Sigmoid colon (tissue), 7 donors: ENCODE measurements at regions of chr11 and their contacts with region 1.

Region 1: DNA sequence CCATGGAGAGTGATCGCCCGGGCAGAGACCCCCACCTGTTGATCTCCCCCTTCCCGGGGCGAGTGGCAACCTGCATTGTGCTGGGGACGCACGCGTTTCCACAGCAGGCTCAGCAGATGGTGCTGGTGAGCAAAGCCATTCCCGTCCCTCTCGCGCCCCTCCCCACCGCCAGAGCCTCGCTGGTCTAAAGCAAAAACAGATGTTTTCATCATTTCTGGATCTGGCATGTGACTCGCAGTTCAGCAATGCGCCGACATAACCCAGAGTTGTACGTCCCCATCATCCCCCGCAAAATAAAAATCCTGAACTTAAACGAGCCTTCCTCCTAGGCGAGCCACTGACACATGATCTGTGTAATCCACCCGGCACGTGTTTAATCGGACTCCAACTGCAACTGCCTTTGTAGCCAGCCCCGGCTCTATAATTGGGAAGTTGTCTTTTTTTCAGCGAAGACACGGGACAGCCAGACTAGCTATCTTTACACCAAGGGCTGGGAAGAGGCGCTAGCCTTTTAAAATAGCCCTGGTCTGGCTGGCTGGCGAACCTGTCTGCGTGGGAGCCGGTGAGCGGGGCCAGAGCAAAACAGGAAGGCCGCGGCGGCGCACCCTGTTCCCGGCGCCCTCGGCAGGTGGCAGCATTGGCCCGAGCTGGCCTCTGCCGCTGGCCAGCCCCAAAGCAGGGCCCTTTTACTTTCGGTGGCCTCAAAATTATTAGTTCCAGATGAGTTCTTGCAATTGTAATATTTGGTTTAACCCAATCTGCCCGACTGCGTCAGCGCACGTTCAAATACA is 203.0 kb upstream of the SORL1-AS1 start:
- DNase-seq: peak; percentile 95
- H3K4me3 ChIP-seq: peak overlapping the region; percentile 27 to 50 (median 40)
- H3K27ac ChIP-seq: peak overlapping the region; percentile 83 to 95 (median 89)
- H3K4me1 ChIP-seq: peaks cover 0 to 31% (median 21%) of the 10 kb centered on the region in 4 donors
- H3K27me3 ChIP-seq: no peaks in the 10 kb centered on the region
- CTCF ChIP-seq: peak; percentile 76 to 84 (median 80)
- EP300 ChIP-seq: peak in 2 of 4 donors; percentile 15 to 16
- POLR2A ChIP-seq: no peak

Region 2: DNA sequence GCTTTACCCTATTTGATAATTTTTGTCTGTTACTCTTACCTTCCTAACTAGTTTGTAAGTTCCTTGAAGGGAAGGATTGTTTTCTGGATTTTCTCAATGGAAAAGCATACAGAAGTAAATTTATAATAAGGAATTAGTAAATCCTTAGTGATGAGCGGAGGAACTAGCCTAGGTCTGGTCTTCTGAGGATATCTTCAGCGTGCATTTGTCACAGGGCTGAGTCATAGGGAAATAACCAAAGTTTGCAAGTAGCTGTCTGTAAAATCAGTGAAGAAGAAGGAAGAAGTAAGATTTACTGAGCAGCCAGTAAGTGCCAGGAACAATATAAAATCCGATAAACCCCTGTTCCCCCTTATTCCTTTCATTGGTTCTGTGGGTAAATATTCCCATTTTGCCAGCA is 40.2 kb before region 1 on chr11:
- intact Hi-C with region 1: no loop called
- DNase-seq: no peak
- H3K4me3 ChIP-seq: no peak overlapping the region
- H3K27ac ChIP-seq: no peak overlapping the region
- H3K4me1 ChIP-seq: peaks cover 0 to 7% (median 4%) of the 10 kb centered on the region in 4 donors
- H3K27me3 ChIP-seq: no peaks in the 10 kb centered on the region
- CTCF ChIP-seq: no peak
- EP300 ChIP-seq: no peak
- POLR2A ChIP-seq: no peak

Region 3: GRCh38 chr11:121722431-121723245 is 66.9 kb after region 1 on chr11:
- intact Hi-C with region 1: loop called (anchors 1 kb)
- DNase-seq: peak; percentile 97
- H3K4me3 ChIP-seq: peak overlapping the region; percentile 35 to 56 (median 50)
- H3K27ac ChIP-seq: peak overlapping the region; percentile 88 to 96 (median 89)
- H3K4me1 ChIP-seq: peaks cover 0 to 23% (median 15%) of the 10 kb centered on the region in 4 donors
- H3K27me3 ChIP-seq: no peaks in the 10 kb centered on the region
- CTCF ChIP-seq: peak in 1 of 4 experiments; percentile 13
- EP300 ChIP-seq: peak; percentile 19 to 97 (median 74)
- POLR2A ChIP-seq: peak; percentile 59 to 85

Region 4: GRCh38 chr11:121741761-121742361 is 86.1 kb after region 1 on chr11:
- intact Hi-C with region 1: loop called (anchors 2 kb)
- DNase-seq: peak; percentile 94
- H3K4me3 ChIP-seq: peak overlapping the region in 1 of 4 donors; percentile 7
- H3K27ac ChIP-seq: peak overlapping the region; percentile 82 to 89 (median 86)
- H3K4me1 ChIP-seq: peaks cover 0 to 37% (median 32%) of the 10 kb centered on the region in 4 donors
- H3K27me3 ChIP-seq: no peaks in the 10 kb centered on the region
- CTCF ChIP-seq: no peak
- EP300 ChIP-seq: peak; percentile 57 to 94 (median 82)
- POLR2A ChIP-seq: no peak

Region 5: GRCh38 chr11:121810291-121810690 is 154.6 kb after region 1 on chr11:
- intact Hi-C with region 1: loop called (anchors 5 kb)
- DNase-seq: no peak
- H3K4me3 ChIP-seq: no peak overlapping the region
- H3K27ac ChIP-seq: peak overlapping the region; percentile 64 to 72 (median 68)
- H3K4me1 ChIP-seq: peaks cover 0 to 30% (median 24%) of the 10 kb centered on the region in 4 donors
- H3K27me3 ChIP-seq: no peaks in the 10 kb centered on the region
- CTCF ChIP-seq: no peak
- EP300 ChIP-seq: no peak
- POLR2A ChIP-seq: no peak

Region 6: GRCh38 chr11:122020902-122021301 is 365.2 kb after region 1 on chr11:
- intact Hi-C with region 1: loop called (anchors 5 kb)
- DNase-seq: no peak
- H3K4me3 ChIP-seq: no peak overlapping the region
- H3K27ac ChIP-seq: no peak overlapping the region
- H3K4me1 ChIP-seq: no peaks in the 10 kb centered on the region
- H3K27me3 ChIP-seq: no peaks in the 10 kb centered on the region
- CTCF ChIP-seq: peak in 2 of 4 experiments; percentile 29 to 49
- EP300 ChIP-seq: no peak
- POLR2A ChIP-seq: no peak

Region 7: GRCh38 chr11:122202951-122203456 is 547.3 kb after region 1 on chr11:
- intact Hi-C with region 1: loop called (anchors 1 kb)
- DNase-seq: peak; percentile 89
- H3K4me3 ChIP-seq: peak overlapping the region; percentile 30 to 54 (median 47)
- H3K27ac ChIP-seq: peak overlapping the region; percentile 60 to 80 (median 66)
- H3K4me1 ChIP-seq: peaks cover 0 to 37% (median 19%) of the 10 kb centered on the region in 4 donors
- H3K27me3 ChIP-seq: no peaks in the 10 kb centered on the region
- CTCF ChIP-seq: peak; percentile 91 to 99 (median 92)
- EP300 ChIP-seq: no peak
- POLR2A ChIP-seq: no peak

Region 8: DNA sequence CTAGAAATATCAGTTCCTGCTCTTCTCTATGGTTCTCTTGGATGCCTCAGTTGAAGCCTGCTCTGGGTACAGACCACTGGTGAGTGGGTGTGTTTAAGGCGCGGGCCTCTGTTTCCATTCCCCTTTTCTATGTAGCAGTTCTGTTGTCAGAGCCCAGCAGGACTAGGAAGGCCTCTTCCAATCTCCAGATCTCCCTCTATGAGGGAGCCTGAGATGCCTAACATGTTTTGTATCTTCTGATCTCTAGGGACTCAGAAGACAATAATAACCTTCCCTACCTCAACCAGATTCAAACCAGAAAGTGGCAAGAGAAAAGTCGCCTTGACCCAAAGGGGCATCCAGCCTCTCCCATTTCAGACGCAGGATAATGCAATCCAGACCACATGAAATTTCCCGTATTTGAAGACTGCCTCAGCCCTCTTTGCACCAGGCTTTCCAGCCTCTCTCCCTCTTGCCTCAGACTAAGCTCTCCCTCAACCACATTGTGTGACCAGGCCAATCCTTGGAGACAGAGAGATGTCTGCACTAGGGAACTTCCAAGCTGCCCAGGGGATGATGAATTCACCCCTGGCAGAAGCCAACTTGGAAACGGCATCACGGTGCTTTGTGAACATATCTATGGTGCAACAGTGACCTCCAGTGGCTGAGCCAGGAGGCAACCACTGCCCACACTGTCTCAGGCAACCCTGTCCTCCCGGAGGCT is 849.7 kb after region 1 on chr11:
- intact Hi-C with region 1: loop called (anchors 1 kb)
- DNase-seq: peak; percentile 92
- H3K4me3 ChIP-seq: no peak overlapping the region
- H3K27ac ChIP-seq: peak overlapping the region in 1 of 4 donors; percentile 7
- H3K4me1 ChIP-seq: peaks cover 0 to 5% (median 2%) of the 10 kb centered on the region in 4 donors
- H3K27me3 ChIP-seq: no peaks in the 10 kb centered on the region
- CTCF ChIP-seq: peak; percentile 70 to 81 (median 78)
- EP300 ChIP-seq: no peak
- POLR2A ChIP-seq: no peak